AG04449 (cell line): ENCODE measurements at regions of chr1 and their contacts with region 1.

Region 1: DNA sequence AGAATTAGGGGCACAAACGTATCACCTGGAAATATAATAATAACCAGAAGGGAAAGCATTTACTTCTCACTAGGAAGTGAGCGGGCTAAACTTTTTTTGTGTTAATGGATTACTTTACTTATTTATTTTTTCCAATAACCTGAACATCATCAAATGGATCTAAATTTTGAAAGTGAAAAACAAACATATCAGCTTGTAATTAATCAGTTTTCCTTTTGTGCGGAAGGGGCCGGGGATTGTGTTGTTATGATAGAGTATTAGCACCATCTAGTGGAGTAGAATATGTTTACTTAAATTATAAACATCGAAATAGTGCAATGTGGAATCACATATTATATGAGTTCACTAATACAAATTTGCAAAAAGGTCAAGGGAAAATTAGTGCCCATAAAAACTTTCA is 9.0 kb downstream of the CFH start:
- DNase-seq: no peak
- H3K4me3 ChIP-seq: no peak overlapping the region
- CTCF ChIP-seq: peak; percentile 9

Region 2: DNA sequence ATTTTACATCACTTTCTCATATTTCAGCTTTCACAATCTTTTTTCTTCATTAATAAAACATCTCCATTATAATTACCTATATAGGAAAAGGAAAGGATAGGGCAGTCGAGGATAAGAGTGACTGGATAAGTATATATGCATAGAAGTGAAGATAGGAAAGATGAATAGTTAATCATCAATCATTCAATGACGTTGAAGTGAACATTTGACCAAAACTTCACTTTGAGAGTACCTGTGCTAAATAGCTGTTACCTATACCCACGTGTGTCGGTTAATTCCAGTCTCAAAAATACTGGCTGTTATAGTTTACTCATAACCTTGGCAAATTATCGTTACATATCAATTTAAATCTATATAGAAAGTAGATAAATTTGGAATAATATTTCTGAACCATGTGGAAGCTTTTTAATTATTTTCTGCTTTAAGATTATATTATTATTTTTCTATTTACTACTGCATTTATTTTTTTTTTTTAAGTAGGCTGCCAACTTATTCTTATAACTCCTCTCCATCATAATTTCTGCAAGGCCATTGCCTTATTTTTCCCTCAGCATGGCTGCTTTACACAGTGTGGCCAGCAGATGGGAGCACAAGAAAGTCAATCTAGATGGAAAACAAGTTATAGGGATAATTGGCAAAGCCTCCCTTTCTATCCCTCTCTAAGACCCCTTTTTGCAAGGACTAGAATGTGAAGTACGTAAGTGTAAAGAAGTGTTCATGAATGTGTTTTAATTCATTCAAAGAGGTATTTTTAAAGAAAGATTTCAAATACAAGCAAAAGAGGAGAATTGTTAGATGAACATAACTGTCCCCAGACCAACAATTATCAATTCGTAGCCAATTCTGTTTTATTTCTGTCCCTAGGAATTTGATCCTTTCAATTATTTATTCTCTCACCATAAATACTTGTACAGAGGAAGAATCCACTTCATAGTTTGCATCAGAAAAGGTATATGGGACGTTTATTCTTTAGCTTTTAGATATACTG is 343.0 kb before region 1 on chr1:
- CTCF ChIA-PET with region 1: interaction called, 32 read pairs
- POLR2A ChIA-PET with region 1: no interaction called
- DNase-seq: peak; percentile 3
- H3K4me3 ChIP-seq: no peak overlapping the region
- CTCF ChIP-seq: peak; percentile 64

Region 3: DNA sequence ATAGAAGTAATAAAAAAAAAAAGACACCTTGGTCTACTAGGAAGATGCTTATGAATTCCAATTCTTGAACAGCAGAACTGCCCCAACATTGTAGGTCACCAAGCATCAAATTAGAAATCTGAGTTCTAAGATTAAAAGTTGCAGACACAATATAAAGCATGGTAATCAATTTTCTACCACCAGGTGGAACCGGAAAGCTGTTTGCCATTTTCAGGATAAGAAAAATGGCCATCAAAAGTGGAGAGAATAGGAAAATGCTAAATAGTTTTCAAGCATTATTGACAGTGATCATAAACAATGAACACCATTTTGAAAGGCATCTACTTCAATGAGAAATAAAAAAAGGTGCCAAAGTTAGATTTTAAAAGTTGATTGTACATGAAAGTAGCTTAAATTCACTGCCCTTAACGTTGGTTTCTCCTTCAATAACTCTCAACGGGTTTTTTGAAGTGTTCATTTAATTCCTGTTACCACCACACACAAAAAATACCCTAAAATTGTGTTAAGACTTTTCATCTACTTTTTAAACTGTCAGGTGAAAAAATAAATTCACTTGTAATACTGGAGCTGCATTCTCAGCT is 305.6 kb before region 1 on chr1:
- CTCF ChIA-PET with region 1: interaction called, 97 read pairs
- POLR2A ChIA-PET with region 1: no interaction called
- DNase-seq: no peak
- H3K4me3 ChIP-seq: no peak overlapping the region
- CTCF ChIP-seq: peak; percentile 33

Region 4: DNA sequence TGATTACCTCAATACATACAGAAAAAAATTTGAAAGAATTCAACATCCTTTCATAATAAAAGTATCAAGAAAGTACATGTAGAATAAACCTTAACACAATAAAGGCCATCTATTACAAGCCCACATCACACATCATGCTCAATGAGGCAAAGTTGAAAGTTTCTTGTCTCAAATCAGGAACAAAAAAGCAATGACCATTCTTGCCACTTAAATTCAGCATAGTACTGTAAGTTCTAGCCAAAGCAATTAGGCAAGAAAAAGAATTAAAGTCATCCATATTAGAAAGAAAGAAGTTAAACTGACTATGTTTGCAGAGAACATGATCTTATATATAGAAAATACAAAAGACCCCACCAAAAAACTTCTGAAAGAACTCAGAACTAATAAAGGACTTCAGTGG is 97.1 kb before region 1 on chr1:
- CTCF ChIA-PET with region 1: no interaction called
- POLR2A ChIA-PET with region 1: no interaction called
- DNase-seq: no peak
- H3K4me3 ChIP-seq: no peak overlapping the region
- CTCF ChIP-seq: no peak

Region 5: DNA sequence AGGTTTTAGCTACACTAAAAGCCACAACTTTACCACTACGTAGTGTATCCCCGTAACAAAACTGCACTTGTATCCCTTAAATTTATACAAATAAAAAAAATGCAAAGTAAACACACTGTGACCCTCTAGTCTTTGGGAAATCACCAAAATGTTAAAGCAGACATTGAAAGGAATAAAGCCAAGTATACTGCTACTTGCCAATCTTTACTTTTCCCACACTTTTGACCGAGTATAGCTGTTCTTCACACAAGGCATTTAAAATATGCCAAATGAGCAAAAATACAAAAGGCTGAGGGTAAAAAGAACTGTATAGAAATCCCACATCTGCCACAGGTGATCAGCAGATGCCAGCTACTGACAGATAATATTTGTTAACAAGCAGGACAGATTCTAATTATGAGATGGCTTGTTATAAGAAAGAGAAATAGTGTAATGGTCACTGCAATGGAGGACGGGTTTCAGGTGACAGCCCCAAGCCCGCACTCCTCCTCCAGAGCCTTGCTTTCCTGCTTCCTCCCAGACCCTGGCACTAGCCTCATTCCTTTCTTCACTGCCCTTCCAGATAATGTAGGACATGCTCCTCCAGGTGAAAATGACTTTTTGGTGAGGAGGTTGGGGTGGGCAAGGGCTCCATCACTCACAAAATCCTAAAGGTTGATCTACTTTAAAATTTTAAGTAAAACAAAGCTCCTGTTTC is 70.7 kb before region 1 on chr1:
- CTCF ChIA-PET with region 1: no interaction called
- POLR2A ChIA-PET with region 1: no interaction called
- DNase-seq: no peak
- H3K4me3 ChIP-seq: no peak overlapping the region
- CTCF ChIP-seq: no peak

Region 6: GRCh38 chr1:196678510-196678884 is 17.6 kb after region 1 on chr1:
- CTCF ChIA-PET with region 1: interaction called, 16 read pairs
- POLR2A ChIA-PET with region 1: no interaction called
- DNase-seq: peak; percentile 53
- H3K4me3 ChIP-seq: no peak overlapping the region
- CTCF ChIP-seq: no peak